GM12878 (cell line): ENCODE measurements at regions of chr5 and their contacts with region 1.

Region 1: DNA sequence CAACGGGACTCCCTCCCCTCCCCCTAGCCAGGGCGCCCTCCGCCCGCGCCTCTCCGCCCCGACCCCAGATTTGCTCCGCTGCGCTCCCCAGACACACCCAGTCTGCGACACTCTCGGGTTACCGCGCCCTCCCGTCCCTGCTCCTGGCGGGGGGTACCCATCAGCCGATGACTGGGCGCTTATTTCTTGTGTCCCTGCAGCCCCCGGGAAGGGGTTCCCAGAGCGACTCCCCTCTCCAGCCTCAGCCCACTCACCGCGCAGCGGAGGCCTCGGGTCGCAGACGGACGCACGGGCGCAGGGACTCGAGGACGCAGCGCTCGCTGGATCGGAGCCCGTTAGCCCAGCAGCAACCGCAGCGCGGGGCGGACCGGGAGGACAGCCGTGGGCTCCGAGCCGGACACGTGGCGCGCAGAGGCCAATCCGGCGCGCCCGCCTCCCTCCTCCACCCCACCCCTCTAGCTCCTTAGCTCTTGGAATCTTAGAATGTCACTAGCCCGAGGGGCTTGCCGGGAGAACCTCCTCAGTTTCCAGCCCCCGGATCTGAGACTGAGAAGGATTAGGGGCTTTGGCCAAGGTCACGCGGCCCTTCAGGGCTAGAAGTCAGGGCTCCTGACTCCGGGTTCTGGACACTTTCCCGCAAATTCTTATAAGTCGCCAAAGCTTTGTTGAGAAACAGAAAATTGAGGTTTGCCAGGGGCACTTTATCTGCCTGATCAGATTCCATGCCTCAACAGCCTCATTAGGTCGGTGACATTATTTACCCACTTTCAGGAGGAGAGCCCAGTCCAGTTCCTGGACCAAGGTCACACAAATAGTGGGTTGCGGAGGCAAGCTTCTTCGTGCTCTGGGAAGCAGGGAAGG is at the start of gene ANXA6:
- DNase-seq: no peak
- ATAC-seq: peak; percentile 77
- H3K4me3 ChIP-seq: peak within 1 kb of the TSS; percentile 97
- H3K27ac ChIP-seq: peak within 1 kb of the TSS; percentile 89
- H3K4me1 ChIP-seq: peaks cover 26% of the 10 kb centered on the region
- H3K27me3 ChIP-seq: no peaks in the 10 kb centered on the region
- CTCF ChIP-seq: no peak
- EP300 ChIP-seq: no peak
- POLR2A ChIP-seq: peak; percentile 81
- RAD21 ChIP-seq: no peak
- polyA plus RNA-seq, gene ANXA6: 44.0 to 73.1 TPM

Region 2: GRCh38 chr5:150409638-150410523 is 747.8 kb before region 1 on chr5:
- CTCF ChIA-PET with region 1: no interaction called
- POLR2A ChIA-PET with region 1: interaction called, 3 read pairs
- RAD21 ChIA-PET with region 1: no interaction called
- SMC1A ChIA-PET with region 1: no interaction called
- in situ Hi-C with region 1: no loop called
- intact Hi-C with region 1: loop called (anchors 10 kb)
- DNase-seq: peak; percentile 84
- ATAC-seq: peak; percentile 13
- H3K4me3 ChIP-seq: peak overlapping the region; percentile 99
- H3K27ac ChIP-seq: peak overlapping the region; percentile 100
- H3K4me1 ChIP-seq: peaks cover 32% of the 10 kb centered on the region
- H3K27me3 ChIP-seq: no peaks in the 10 kb centered on the region
- CTCF ChIP-seq: no peak
- EP300 ChIP-seq: no peak
- POLR2A ChIP-seq: peak; percentile 89
- RAD21 ChIP-seq: no peak

Region 3: DNA sequence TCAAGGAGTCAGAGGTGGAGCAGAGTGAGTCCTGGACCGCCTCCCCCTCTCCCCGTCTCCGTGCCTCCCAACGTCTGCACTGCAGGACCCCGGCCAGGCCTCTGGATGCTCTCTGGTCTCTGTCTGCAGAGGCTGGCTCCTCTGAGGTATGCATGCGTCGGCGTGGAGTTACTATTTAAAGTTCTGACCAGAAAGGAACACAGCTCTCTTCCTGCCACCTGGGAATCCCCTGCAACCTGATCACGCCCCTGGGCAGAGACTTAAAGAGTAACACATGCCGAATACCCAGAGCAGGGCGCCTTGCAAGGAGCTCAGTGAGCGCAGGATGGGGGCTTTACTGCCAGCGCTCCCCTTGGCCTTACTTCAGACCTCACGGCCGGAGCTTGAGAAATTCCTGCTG is 16.1 kb before region 1 on chr5:
- CTCF ChIA-PET with region 1: interaction called, 1,107 read pairs
- POLR2A ChIA-PET with region 1: interaction called, 152 read pairs
- RAD21 ChIA-PET with region 1: interaction called, 222 read pairs
- SMC1A ChIA-PET with region 1: interaction called, 1,132 read pairs
- in situ Hi-C with region 1: no loop called
- intact Hi-C with region 1: no loop called
- DNase-seq: no peak
- ATAC-seq: peak; percentile 90
- H3K4me3 ChIP-seq: peak overlapping the region; percentile 52
- H3K27ac ChIP-seq: peak overlapping the region; percentile 61
- H3K4me1 ChIP-seq: peaks cover 60% of the 10 kb centered on the region
- H3K27me3 ChIP-seq: no peaks in the 10 kb centered on the region
- CTCF ChIP-seq: no peak
- EP300 ChIP-seq: no peak
- POLR2A ChIP-seq: peak; percentile 67
- RAD21 ChIP-seq: 0 out of 2 replicates have a peak, but pooled peaks have one; percentile 13